Prostate gland (tissue), 2 donors: ENCODE measurements at regions of chr6 and their contacts with region 1.

Region 1: DNA sequence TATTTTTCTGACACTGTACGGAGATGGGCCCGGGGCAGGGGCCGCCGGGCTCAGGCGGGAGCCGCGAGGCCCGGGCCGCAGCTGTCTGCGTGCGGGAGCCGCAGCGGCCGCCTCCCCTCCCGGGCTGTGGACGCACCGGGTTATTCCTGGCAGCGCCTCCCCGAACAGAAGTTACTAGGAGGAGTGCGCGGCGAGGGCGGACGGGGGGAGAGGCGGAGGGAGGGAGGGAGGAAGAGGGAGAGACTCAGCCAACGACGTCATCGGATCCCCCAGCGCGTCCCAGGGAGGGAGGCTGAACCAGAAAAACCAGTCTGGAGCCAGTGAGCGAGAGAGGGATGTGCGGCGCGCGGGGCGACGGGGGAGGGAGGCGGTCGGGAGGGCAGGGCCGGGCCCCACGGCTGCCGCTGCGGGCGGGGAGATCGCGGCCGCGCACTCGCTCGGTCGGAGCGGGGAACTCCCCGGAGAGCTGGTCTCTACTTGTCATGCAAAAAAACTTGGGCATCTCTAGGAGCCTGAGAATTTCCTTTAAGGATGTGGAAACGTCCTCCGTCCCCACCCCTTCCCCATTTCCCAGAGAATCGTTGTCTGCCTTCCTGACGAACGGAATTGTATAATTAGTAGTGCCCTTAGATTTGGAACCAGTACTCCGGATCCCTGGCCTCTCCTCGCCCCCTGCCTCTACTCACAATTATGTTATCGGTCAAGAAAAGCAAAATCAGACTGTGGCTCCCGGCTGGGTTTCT is 1.4 kb upstream of the HIVEP2 start:
- DNase-seq: peak; percentile 99
- H3K4me3 ChIP-seq: peak overlapping the region; percentile 87 to 94
- H3K27ac ChIP-seq: peak overlapping the region; percentile 99 to 100
- H3K4me1 ChIP-seq: peaks cover 4% of the 10 kb centered on the region
- H3K27me3 ChIP-seq: no peaks in the 10 kb centered on the region
- CTCF ChIP-seq: peak in 1 of 4 experiments; percentile 17
- POLR2A ChIP-seq: peak; percentile 84

Region 2: GRCh38 chr6:142613981-142614380 is 332.4 kb before region 1 on chr6:
- intact Hi-C with region 1: no loop called
- DNase-seq: no peak
- H3K4me3 ChIP-seq: no peak overlapping the region
- H3K27ac ChIP-seq: no peak overlapping the region
- H3K4me1 ChIP-seq: no peaks in the 10 kb centered on the region
- H3K27me3 ChIP-seq: no peaks in the 10 kb centered on the region
- CTCF ChIP-seq: no peak
- POLR2A ChIP-seq: no peak

Region 3: DNA sequence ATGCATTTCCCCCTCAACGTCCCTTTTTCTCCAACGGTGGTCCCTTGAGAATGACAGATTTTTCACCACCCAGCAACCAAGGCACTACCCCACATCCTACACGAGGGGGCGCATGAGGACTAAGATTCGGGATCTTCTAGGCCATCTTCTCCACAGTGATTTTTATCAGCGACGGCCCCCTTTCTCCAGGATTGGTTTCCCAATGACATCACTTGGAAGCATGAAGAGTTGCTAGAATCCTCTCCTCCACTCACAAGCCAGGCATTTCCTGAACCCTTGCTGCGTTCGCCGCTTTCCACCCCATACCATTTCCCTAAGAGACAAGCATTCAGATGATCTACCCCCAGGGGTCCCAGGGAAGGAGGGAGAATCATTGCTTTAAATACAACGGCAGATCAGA is 253.4 kb before region 1 on chr6:
- intact Hi-C with region 1: loop called (anchors 2 kb)
- DNase-seq: peak; percentile 52
- H3K4me3 ChIP-seq: no peak overlapping the region
- H3K27ac ChIP-seq: no peak overlapping the region
- H3K4me1 ChIP-seq: no peaks in the 10 kb centered on the region
- H3K27me3 ChIP-seq: no peaks in the 10 kb centered on the region
- CTCF ChIP-seq: peak; percentile 85 to 94 (median 89)
- POLR2A ChIP-seq: no peak

Region 4: GRCh38 chr6:142819603-142820337 is 126.6 kb before region 1 on chr6:
- intact Hi-C with region 1: loop called (anchors 5 kb)
- DNase-seq: no peak
- H3K4me3 ChIP-seq: peak overlapping the region in 1 of 2 donors; percentile 5
- H3K27ac ChIP-seq: peak overlapping the region in 1 of 2 donors; percentile 20
- H3K4me1 ChIP-seq: no peaks in the 10 kb centered on the region
- H3K27me3 ChIP-seq: no peaks in the 10 kb centered on the region
- CTCF ChIP-seq: no peak
- POLR2A ChIP-seq: no peak

Region 5: DNA sequence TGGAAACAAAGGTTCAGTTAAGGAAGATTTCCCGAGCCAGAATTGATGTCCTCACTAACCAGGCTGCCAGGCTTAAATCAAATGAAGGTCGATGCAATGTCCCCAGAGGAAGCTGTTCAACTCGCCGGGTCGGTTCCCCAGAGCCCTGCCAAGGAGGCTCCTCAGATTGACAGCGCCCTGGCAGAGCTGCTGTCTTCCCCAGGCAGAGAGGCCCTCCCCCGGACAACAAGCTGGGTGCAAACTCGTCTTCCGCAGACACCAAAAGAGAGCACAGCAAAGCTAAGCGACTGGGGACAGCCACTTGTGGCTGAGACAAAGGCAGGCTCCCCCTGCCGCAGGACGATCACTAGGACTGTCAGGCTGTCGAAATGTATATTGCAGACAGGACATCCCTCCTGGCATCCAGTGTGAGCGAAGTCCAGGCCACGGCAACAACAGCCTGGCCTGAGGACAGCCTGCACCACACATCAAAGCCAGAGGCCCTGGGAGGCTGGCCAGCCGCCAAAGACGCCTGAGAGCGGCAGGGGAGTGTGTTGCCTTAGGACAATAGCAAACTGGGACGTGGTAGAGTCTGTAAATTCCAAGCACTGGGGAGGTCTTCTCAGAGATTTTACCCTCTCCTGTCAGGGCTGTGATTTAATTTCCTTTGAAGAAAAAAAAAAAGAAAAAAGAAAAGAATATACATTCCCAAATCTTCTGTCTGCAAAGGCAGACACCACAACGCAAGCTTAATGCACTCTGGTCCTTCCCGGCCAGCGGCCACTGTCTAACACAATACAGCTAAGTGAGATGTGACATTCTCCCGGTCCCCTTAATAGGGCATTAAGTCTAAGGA is 100.5 kb before region 1 on chr6:
- intact Hi-C with region 1: loop called (anchors 5 kb)
- DNase-seq: peak; percentile 89
- H3K4me3 ChIP-seq: peak overlapping the region; percentile 9 to 27
- H3K27ac ChIP-seq: peak overlapping the region; percentile 66 to 77
- H3K4me1 ChIP-seq: peaks cover 6% of the 10 kb centered on the region
- H3K27me3 ChIP-seq: no peaks in the 10 kb centered on the region
- CTCF ChIP-seq: no peak
- POLR2A ChIP-seq: no peak

Region 6: DNA sequence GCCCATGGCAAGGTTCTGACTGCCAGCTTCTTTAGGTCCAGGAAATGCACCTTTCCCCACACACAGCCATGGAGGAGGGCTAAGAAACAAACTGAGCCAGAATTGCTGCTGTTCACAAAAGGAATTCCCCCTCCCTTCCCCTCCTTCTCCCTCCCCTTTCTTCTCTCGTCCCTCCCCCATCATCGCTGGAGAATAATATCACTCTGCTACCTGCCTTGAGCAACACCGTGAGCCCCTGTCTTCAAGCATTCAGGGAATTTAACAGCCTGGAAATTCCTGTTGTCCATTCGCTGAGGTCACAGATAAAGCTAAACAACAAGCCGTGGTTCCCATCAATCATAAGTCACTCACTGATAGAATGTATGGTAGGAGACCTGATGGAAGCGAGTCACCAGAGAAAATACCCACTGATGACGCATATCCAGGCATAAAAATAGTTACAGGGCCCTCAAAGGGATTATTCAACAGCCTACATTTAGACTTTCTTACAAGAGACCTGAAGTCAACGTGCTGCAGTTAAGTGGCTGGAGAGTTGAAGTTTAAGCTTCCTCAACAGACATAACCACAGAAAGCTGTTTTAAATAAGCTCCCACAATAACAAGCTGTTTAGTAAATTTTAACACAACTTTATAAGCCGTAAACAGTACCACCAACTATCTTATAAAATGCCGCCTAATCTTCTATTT is 61.0 kb before region 1 on chr6:
- intact Hi-C with region 1: loop called (anchors 5 kb)
- DNase-seq: peak; percentile 40
- H3K4me3 ChIP-seq: peak overlapping the region in 1 of 2 donors; percentile 11
- H3K27ac ChIP-seq: peak overlapping the region; percentile 13 to 41
- H3K4me1 ChIP-seq: no peaks in the 10 kb centered on the region
- H3K27me3 ChIP-seq: no peaks in the 10 kb centered on the region
- CTCF ChIP-seq: no peak
- POLR2A ChIP-seq: no peak

Region 7: GRCh38 chr6:143060354-143060805 is 114.0 kb after region 1 on chr6:
- intact Hi-C with region 1: loop called (anchors 5 kb)
- DNase-seq: peak; percentile 71
- H3K4me3 ChIP-seq: peak overlapping the region; percentile 87 to 89
- H3K27ac ChIP-seq: peak overlapping the region; percentile 93 to 94
- H3K4me1 ChIP-seq: no peaks in the 10 kb centered on the region
- H3K27me3 ChIP-seq: no peaks in the 10 kb centered on the region
- CTCF ChIP-seq: peak in 2 of 4 experiments; percentile 19 to 20
- POLR2A ChIP-seq: peak; percentile 66

Region 8: DNA sequence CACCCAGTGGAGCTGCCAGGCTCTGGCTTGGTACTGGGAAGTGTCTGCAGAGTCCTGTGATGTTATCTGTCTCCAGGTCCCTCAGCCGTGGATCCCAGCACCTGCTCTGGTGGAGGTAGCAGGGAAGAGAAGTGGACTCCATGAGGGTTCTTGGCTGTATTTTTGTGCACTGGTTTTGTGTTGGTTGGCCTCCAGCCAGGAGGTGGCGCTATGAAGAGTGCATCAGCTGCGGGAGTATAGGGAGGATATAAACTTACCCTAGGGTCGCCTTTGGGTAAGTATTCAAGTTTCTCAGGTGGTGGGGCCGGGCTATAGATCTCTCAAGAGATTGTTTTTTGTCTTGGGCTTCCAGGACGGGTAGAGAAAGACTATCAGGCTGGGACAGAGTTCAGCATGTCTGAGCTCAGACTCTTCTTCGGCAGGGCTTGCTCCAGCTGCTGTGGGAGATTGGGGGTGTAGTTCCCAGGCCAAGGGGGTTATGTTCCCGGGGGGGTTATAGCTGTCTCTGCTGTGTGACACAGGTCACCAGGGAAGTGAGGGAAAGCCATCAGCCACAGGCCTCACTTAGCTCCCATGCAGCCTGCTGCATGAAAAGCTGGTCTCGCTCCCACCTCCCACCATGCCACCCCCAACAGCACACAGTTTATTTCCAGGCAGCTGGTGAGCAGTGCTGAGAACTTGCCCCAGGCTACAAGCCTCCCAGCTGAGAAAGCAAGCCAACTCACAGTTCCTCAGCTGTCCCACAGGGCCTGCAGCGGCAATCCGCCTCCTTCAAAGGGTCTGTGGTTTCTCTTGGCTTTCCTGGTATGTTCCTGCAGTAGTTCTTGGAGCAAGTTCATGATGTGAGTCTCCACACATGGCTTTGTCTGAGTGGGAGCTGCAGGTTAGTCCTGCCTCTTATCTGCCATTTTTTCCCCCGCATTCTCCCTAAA is 230.0 kb after region 1 on chr6:
- intact Hi-C with region 1: no loop called
- DNase-seq: no peak
- H3K4me3 ChIP-seq: no peak overlapping the region
- H3K27ac ChIP-seq: no peak overlapping the region
- H3K4me1 ChIP-seq: no peaks in the 10 kb centered on the region
- H3K27me3 ChIP-seq: no peaks in the 10 kb centered on the region
- CTCF ChIP-seq: no peak
- POLR2A ChIP-seq: no peak

Region 9: GRCh38 chr6:143400258-143401067 is 454.1 kb after region 1 on chr6:
- intact Hi-C with region 1: no loop called
- DNase-seq: peak; percentile 42
- H3K4me3 ChIP-seq: no peak overlapping the region
- H3K27ac ChIP-seq: peak overlapping the region in 1 of 2 donors; percentile 41
- H3K4me1 ChIP-seq: no peaks in the 10 kb centered on the region
- H3K27me3 ChIP-seq: no peaks in the 10 kb centered on the region
- CTCF ChIP-seq: no peak
- POLR2A ChIP-seq: no peak